Mucosa of descending colon (tissue), 3 donors: ENCODE measurements at regions of chr5 and their contacts with region 1.

Region 1: DNA sequence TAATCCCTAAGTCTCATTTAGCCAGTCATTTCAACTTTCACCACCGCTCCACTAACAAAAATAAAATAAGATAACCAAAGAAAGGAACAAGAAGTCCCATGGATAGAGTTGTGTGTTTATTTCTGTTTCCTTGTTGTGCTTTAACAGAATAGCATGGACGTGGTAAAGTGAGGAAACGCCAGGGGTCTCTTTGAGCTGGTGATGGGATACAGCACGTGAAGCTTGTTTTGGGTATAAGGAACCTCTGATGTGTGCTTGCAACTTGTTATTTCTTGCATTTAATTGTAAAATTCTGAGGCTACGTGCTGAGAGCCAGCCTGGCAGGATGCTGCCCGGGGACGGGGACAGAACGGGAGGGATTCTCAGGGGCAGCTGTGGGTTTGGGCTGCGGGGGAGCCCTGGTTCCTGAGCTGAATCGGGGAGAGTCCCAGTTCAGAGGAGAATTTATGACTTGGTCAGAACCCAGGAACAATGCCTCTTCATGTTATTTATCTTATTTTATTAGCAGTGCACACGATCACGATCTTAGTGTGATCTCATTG is 63.4 kb downstream of the ANKRD33B start:
- DNase-seq: no peak
- ATAC-seq: no peak
- H3K4me3 ChIP-seq: no peak overlapping the region
- H3K4me1 ChIP-seq: peaks cover 16% of the 10 kb centered on the region
- CTCF ChIP-seq: no peak

Region 2: GRCh38 chr5:10201223-10201868 is 425.9 kb before region 1 on chr5:
- intact Hi-C with region 1: no loop called
- DNase-seq: peak in 1 of 3 donors; percentile 17
- ATAC-seq: peak; percentile 34
- H3K4me3 ChIP-seq: no peak overlapping the region
- H3K4me1 ChIP-seq: no peaks in the 10 kb centered on the region
- CTCF ChIP-seq: no peak

Region 3: GRCh38 chr5:10283927-10284635 is 343.1 kb before region 1 on chr5:
- intact Hi-C with region 1: loop called in 1 of 2 experiments (anchors 10 kb)
- DNase-seq: peak; percentile 85 to 95 (median 91)
- ATAC-seq: peak; percentile 88
- H3K4me3 ChIP-seq: no peak overlapping the region
- H3K4me1 ChIP-seq: peaks cover 27% of the 10 kb centered on the region
- CTCF ChIP-seq: peak; percentile 82

Region 4: GRCh38 chr5:10452768-10453331 is 174.4 kb before region 1 on chr5:
- intact Hi-C with region 1: loop called (anchors 1 to 5 kb)
- DNase-seq: peak in 1 of 3 donors; percentile 46
- ATAC-seq: peak; percentile 83
- H3K4me3 ChIP-seq: no peak overlapping the region
- H3K4me1 ChIP-seq: peaks cover 4% of the 10 kb centered on the region
- CTCF ChIP-seq: peak; percentile 46

Region 5: DNA sequence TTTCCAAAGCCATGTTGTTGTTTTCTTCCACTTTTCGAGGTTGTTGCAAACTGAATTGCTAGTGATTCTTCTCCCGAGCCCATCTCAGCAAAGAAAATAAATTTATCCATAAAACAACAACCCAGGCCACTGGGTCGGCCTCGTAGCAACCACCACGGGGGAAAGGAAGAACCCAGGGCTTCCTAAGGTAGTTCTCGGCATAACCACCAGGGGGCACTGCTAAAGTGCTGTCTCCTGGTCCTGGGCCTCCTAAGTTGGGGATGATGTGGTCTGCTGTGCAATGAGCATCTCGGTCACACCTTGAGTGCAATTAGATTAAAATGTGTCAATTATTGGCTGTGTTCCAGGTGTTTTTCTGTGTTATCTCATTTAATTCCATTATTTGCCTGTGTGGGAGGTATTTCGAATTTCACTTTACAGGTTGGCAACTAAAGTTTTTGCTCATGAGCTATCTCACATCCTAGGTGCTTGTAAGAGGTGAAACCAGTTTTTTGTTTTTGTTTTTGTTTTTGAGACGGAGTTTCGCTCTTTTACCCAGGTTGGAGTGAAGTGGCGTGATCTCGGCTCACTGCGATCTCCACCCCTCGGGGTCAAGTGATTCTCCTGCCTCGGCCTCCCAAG is 236.6 kb after region 1 on chr5:
- intact Hi-C with region 1: no loop called
- DNase-seq: peak in 2 of 3 donors; percentile 45 to 72
- ATAC-seq: peak; percentile 81
- H3K4me3 ChIP-seq: no peak overlapping the region
- H3K4me1 ChIP-seq: no peaks in the 10 kb centered on the region
- CTCF ChIP-seq: peak; percentile 69